Activated B cell treated with CpG ODN at 0.5 μM for 24 hours (primary cell): ENCODE measurements at regions of chr10 and their contacts with region 1.

Region 1: DNA sequence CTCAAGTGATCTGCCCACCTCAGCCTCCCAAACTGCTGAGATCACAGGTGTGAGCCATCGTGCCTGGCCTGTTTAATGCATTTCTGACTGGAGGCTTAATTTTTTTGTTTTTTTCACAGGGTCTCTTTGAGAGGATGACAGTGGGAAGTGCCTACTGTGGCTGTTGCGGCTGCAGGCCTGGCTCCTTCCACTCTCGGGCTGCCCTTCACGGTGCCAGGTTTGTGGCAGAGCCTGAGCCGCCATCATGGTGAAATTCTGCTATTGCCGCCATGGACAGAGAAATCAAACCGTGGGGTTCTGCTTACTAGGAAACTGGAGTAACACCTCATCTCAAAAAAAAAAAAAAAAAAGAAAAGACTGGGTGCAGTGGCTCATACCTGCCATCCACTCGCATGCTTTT is 142.7 kb downstream of the CAMK1D start:
- DNase-seq: no peak
- ATAC-seq: no peak
- H3K4me3 Mint-ChIP-seq: no peak overlapping the region
- H3K27ac Mint-ChIP-seq: no peak overlapping the region
- H3K4me1 Mint-ChIP-seq: peaks cover 13% of the 10 kb centered on the region
- H3K27me3 Mint-ChIP-seq: no peaks in the 10 kb centered on the region
- CTCF ChIP-seq: no peak

Region 2: GRCh38 chr10:12509016-12509793 is 17.2 kb after region 1 on chr10:
- CTCF ChIA-PET with region 1: no interaction called
- POLR2A ChIA-PET with region 1: no interaction called
- intact Hi-C with region 1: loop called (anchors 2 kb)
- DNase-seq: no peak
- ATAC-seq: no peak
- H3K4me3 Mint-ChIP-seq: no peak overlapping the region
- H3K27ac Mint-ChIP-seq: peak overlapping the region; percentile 11
- H3K4me1 Mint-ChIP-seq: peaks cover 76% of the 10 kb centered on the region
- H3K27me3 Mint-ChIP-seq: no peaks in the 10 kb centered on the region
- CTCF ChIP-seq: no peak

Region 3: GRCh38 chr10:12902135-12902572 is 410.1 kb after region 1 on chr10:
- CTCF ChIA-PET with region 1: no interaction called
- POLR2A ChIA-PET with region 1: no interaction called
- intact Hi-C with region 1: no loop called
- DNase-seq: peak; percentile 18
- ATAC-seq: no peak
- H3K4me3 Mint-ChIP-seq: no peak overlapping the region
- H3K27ac Mint-ChIP-seq: no peak overlapping the region
- H3K4me1 Mint-ChIP-seq: no peaks in the 10 kb centered on the region
- H3K27me3 Mint-ChIP-seq: peaks cover 23% of the 10 kb centered on the region
- CTCF ChIP-seq: peak; percentile 82